Ascending aorta (tissue), 2 donors: ENCODE measurements at regions of chr2 and their contacts with region 1.

Region 1: DNA sequence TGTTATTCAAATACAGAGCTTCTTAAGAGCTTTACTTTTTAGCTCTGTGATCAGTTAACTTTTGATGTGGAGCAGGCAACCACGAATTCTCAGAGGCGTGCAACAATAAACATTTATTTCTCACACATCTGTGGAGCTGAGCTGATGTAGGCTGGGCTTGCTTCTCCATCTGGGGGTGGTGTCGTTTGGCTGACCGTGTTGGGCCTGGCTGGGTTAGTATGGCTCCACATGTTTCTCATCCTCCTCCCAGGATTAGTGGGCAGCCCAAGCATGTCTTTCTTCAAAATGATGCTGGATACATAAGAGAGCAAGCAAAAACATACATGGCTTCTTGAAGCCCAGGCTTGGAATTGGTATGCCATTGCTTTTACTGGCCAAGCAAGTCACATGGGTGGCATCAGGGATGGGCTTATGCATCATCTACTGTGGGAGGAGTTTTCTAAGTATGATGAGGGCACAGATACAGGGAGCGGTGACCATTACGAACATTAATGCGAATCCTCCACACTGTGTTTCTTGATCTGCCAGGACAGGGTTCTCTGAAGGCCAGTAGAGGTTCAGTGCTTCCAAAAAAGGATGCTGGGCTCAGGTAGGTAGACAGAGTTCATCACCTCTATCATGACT is 157.0 kb upstream of the TNP1 start:
- DNase-seq: no peak
- H3K4me3 ChIP-seq: no peak overlapping the region
- H3K27ac ChIP-seq: no peak overlapping the region
- H3K4me1 ChIP-seq: peaks cover 0 to 10% of the 10 kb centered on the region in 2 donors
- H3K27me3 ChIP-seq: no peaks in the 10 kb centered on the region
- CTCF ChIP-seq: no peak

Region 2: DNA sequence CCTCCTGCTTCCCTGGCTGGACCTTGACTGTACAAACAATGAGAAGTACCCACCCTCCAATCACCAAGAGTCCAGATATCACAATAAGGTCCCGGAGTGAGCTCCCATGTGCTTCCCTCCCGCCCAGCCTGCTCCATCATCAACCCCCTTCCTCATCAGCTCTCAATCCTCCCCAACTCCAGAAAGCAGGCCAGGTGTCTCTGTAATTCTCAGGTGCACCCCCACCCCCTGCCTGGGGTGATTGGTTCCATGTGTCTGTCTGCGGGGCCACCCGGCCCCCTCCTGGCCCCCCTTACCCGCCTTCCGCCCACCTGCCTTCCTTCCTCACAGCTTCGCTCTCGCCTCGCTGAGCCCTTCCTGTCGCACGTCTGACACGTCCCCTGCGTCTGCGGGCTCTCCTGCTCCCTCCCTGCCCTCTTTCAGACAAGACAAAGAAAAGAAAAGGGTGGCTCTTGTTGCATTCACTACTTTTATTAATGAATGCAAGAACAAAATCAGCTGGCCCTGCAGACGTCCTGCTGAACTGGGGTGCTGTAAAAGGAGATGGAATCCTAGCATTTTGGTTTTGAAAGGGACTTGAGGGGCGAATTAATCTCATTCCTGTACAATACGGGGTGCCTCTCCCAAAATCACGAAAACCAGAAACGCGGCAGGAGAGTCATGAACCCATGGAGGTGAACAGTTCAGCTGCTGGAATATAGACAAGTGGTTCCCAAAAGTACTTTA is 410.2 kb before region 1 on chr2:
- intact Hi-C with region 1: no loop called
- DNase-seq: no peak
- H3K4me3 ChIP-seq: no peak overlapping the region
- H3K27ac ChIP-seq: no peak overlapping the region
- H3K4me1 ChIP-seq: no peaks in the 10 kb centered on the region
- H3K27me3 ChIP-seq: no peaks in the 10 kb centered on the region
- CTCF ChIP-seq: no peak

Region 3: GRCh38 chr2:217035967-217036366 is 19.1 kb after region 1 on chr2:
- intact Hi-C with region 1: no loop called
- DNase-seq: peak in 1 of 2 donors; percentile 70
- H3K4me3 ChIP-seq: no peak overlapping the region
- H3K27ac ChIP-seq: no peak overlapping the region
- H3K4me1 ChIP-seq: peaks cover 0 to 12% of the 10 kb centered on the region in 2 donors
- H3K27me3 ChIP-seq: no peaks in the 10 kb centered on the region
- CTCF ChIP-seq: no peak

Region 4: DNA sequence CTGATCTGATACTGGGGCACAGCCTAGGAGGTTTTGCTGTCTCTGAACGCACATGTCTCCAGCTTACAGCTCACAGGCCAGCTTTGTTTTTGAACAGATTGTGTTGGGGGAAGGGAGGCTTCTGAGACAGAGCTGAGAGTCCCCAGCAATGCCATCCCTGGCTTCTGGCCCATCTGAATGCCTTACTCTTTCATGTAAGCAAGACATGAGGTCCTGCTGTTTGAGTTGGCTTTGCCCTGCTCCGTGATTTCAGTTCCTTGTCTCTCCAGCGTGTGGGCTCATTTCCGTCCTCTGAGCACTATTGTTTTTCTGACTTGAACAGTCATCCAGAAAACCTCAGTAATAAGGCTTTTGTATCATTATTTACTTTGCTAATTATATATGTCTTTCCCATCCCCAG is 37.9 kb after region 1 on chr2:
- intact Hi-C with region 1: loop called (anchors 2 kb)
- DNase-seq: peak in 1 of 2 donors; percentile 70
- H3K4me3 ChIP-seq: no peak overlapping the region
- H3K27ac ChIP-seq: peak overlapping the region; percentile 78 to 89
- H3K4me1 ChIP-seq: peaks cover 13 to 45% of the 10 kb centered on the region in 2 donors
- H3K27me3 ChIP-seq: no peaks in the 10 kb centered on the region
- CTCF ChIP-seq: no peak

Region 5: DNA sequence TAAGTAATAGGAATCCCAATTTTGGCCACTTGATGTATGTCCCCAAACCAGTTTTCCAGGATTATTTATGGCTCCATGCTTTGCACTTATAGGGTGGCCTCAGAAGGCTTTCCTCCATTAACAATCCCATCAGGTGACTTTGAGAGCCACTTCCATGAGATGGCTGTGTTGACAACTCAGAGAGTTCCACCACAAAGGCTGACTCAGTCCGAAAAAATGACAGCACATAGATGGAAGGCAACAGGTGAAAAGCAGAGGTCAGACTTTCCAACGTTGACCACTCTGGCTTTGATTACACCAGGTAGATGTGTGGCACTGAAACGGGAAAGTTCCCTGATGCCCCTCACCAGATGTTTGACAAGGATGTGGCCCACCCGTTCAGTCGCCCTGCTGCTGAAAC is 274.3 kb after region 1 on chr2:
- intact Hi-C with region 1: no loop called
- DNase-seq: no peak
- H3K4me3 ChIP-seq: no peak overlapping the region
- H3K27ac ChIP-seq: no peak overlapping the region
- H3K4me1 ChIP-seq: no peaks in the 10 kb centered on the region
- H3K27me3 ChIP-seq: no peaks in the 10 kb centered on the region
- CTCF ChIP-seq: no peak